Mucosa of descending colon (tissue), 3 donors: ENCODE measurements at regions of chr3 and their contacts with region 1.

Region 1: DNA sequence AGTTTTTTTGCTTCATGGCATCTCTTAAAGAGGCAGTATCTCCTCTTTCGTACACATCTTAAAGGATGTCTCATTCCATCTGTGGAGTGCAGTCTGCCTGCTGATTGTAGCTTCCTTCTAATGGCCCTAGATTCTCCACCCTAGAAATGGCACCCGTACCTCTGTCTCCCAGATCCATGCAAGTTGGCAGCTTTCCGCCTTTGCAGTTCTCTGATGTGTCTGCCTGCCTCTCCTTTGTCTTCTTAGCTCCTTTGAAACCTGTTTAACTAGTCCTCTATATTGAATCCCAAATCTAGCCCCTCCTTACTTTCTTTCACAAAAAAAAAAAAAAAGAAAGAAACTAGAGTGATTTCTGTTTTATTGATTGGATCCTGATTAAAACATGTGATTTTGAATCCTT is 1025.0 kb downstream of the ZPLD1 start:
- DNase-seq: no peak
- ATAC-seq: no peak
- H3K4me3 ChIP-seq: no peak overlapping the region
- H3K4me1 ChIP-seq: no peaks in the 10 kb centered on the region
- CTCF ChIP-seq: no peak

Region 2: GRCh38 chr3:103227651-103228050 is 232.2 kb before region 1 on chr3:
- intact Hi-C with region 1: loop called in 1 of 2 experiments (anchors 10 kb)
- DNase-seq: no peak
- ATAC-seq: no peak
- H3K4me3 ChIP-seq: no peak overlapping the region
- H3K4me1 ChIP-seq: no peaks in the 10 kb centered on the region
- CTCF ChIP-seq: no peak

Region 3: GRCh38 chr3:103705641-103706040 is 245.8 kb after region 1 on chr3:
- intact Hi-C with region 1: no loop called
- DNase-seq: no peak
- ATAC-seq: no peak
- H3K4me3 ChIP-seq: no peak overlapping the region
- H3K4me1 ChIP-seq: no peaks in the 10 kb centered on the region
- CTCF ChIP-seq: no peak